IMR-90 (cell line): ENCODE measurements at regions of chr2 and their contacts with region 1.

Region 1: DNA sequence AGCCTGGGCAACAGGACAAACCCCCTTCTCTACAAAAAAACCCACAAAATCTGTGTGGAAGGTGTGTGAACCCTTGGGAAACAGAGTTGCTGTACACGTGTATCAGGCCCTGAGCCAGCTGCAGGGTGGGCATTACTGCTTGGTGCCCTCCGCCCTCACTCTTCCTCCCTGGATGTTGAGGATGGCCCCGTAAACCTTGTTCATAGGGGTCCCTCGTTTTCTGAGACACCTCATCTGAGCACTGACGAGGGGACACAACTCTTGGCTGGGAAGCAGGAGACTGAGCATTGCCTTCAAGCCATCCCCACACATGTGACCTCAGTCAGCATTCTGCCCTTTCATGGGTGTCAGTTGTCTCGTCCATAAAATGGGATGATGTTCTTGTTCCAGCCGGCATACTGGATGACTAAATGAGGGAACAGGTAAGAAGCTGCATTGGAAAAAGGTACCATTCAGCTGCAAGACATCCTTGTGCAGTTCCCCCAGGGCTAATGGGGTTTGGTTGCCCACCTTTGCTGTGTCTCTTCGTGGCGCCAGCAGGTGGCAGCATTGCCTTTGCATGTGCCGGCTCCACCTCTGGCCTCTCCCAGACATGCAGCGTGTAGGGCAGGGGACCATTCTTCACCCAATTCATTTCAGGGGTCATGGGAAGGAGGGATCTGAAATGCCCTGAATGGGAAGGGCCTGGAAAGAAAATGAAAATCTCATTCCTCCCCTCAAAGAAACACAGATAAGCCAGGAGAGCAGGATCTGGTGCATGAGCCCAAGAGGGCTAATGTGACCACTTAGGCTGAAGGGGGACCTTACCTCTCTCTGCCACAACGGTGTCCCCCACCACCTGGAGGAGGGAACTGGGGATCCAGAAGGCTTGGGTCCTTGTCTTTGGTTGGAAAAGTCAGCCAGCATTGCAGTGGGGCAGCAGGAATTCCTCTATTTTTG is 36.4 kb upstream of the HAAO start:
- DNase-seq: peak; percentile 63
- ATAC-seq: peak; percentile 85
- H3K4me3 ChIP-seq: no peak overlapping the region
- H3K27ac ChIP-seq: no peak overlapping the region
- H3K4me1 ChIP-seq: peaks cover 2% of the 10 kb centered on the region; the same call in 1 of the 2 replicates
- H3K27me3 ChIP-seq: no peaks in the 10 kb centered on the region
- CTCF ChIP-seq: peak; percentile 84
- POLR2A ChIP-seq: no peak
- RAD21 ChIP-seq: peak; percentile 88

Region 2: DNA sequence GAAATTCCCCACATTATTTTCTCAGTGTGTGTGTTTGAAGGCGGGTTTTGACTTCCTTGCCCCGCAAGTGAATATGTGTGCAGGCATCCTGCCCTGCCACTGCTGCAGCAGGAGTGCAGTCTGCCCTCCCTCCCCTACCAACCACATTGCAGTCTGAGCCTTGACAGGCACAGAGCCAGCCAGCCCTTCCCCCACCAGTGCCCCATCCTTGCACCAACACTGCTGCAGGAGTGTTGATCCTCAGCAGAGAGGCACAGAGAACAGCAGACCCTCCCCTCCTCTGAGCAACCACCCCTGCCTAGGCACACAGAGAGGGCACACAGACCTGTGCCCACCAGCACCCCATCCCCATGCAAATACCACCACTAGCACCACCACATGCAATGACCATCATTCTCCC is 1463.9 kb before region 1 on chr2:
- CTCF ChIA-PET with region 1: no interaction called
- POLR2A ChIA-PET with region 1: no interaction called
- dilution Hi-C with region 1: no loop called
- in situ Hi-C with region 1: no loop called
- intact Hi-C with region 1: no loop called
- DNase-seq: no peak
- ATAC-seq: no peak
- H3K4me3 ChIP-seq: no peak overlapping the region
- H3K27ac ChIP-seq: no peak overlapping the region
- H3K4me1 ChIP-seq: no peaks in the 10 kb centered on the region
- H3K27me3 ChIP-seq: no peaks in the 10 kb centered on the region
- CTCF ChIP-seq: no peak
- POLR2A ChIP-seq: no peak
- RAD21 ChIP-seq: no peak

Region 3: DNA sequence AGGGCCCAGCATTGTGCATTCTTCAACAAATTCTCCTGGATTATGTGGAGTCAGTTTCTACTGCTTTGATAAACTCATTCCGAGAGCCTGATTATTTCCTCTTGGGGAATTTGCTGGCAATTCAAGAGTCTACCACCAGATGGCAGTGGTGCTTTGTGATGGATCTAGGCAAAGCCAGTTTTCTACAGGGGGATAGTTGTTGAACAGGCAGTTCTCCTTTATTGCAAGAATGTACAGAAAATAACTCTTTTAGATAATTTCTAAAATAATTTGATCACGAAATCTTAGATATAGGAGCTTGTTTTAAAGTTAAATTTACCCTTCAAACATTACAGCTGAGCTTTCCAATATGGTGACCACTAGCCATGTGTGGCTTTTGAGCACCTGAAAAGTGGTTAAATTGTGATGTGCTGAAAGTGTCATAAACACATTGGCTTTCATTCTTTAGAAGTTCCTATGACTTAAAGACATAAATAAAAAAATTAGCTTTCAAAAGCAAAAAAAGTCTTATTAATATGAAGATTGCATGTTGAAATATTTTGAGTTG is 30.3 kb after region 1 on chr2:
- CTCF ChIA-PET with region 1: interaction called, 4 read pairs
- POLR2A ChIA-PET with region 1: no interaction called
- dilution Hi-C with region 1: no loop called
- in situ Hi-C with region 1: no loop called
- intact Hi-C with region 1: loop called (anchors 1 kb)
- DNase-seq: peak; percentile 81
- ATAC-seq: peak; percentile 81
- H3K4me3 ChIP-seq: no peak overlapping the region
- H3K27ac ChIP-seq: no peak overlapping the region
- H3K4me1 ChIP-seq: peaks cover 5% of the 10 kb centered on the region
- H3K27me3 ChIP-seq: no peaks in the 10 kb centered on the region
- CTCF ChIP-seq: peak; percentile 93
- POLR2A ChIP-seq: no peak
- RAD21 ChIP-seq: peak; percentile 95

Region 4: DNA sequence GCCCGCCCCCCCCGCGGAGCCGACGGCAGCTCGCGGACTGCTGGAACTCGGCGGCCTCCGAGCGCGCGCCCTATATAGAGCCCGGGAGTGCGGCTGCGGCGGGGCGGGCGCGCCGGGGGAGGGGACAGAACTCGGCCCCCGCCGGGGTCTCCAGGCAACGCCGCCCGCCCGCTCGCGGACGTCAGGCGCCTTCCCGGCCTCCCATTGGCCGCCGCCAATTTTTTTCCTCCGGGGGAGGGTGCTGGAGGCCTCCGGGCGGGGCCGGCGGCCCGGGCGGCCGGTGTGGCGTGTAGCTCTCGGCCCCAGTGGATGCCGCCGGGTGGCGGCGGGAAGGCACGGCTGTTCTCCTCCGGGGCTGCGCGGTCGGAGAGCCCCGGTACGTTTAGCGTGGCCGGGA is 397.8 kb after region 1 on chr2 and contains the start of gene ZFP36L2:
- CTCF ChIA-PET with region 1: interaction called, 4 read pairs
- POLR2A ChIA-PET with region 1: no interaction called
- dilution Hi-C with region 1: no loop called
- in situ Hi-C with region 1: no loop called
- intact Hi-C with region 1: loop called (anchors 1 kb)
- DNase-seq: peak; percentile 93
- ATAC-seq: peak; percentile 73
- H3K4me3 ChIP-seq: peak within 1 kb of the TSS; percentile 87
- H3K27ac ChIP-seq: peak within 1 kb of the TSS; percentile 96
- H3K4me1 ChIP-seq: peaks cover 8% of the 10 kb centered on the region
- H3K27me3 ChIP-seq: no peaks in the 10 kb centered on the region
- CTCF ChIP-seq: peak; percentile 19; the same call in 1 of the 2 replicates
- POLR2A ChIP-seq: peak; percentile 97
- RAD21 ChIP-seq: peak; percentile 14; the same call in 1 of the 2 replicates
- total RNA-seq, gene ZFP36L2: 1.8 and 2.2 TPM in 2 replicates

Region 5: DNA sequence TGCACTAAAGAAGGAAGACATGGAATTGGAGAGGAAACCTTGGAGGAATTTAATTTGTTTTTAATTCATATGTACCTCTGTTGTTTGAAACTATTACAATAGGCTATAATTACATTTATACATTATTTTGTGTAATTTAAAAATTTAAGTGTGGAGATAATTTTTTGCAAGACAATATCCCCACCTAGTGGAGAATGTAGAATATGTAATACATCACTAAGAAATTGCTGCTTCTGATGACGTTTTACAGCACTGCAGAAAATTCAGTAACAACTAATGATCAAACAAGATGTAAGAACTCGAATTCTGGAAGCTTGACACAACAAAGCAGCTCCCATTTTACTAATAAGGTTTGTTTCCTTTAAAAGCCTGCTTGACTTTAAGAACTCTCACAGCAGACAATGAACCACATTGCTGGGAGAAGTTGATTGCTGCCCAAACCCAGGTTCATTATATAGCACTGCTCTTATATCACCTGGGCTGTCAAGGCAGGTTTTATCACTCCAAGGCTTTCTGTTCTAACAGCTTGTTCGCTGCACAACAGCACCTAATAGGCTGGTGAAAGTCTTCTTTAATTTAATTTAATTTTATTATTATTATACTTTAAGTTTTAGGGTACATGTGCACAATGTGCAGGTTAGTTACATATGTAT is 713.7 kb after region 1 on chr2:
- CTCF ChIA-PET with region 1: no interaction called
- POLR2A ChIA-PET with region 1: no interaction called
- dilution Hi-C with region 1: no loop called
- in situ Hi-C with region 1: no loop called
- intact Hi-C with region 1: loop called (anchors 2 kb)
- DNase-seq: peak; percentile 68
- ATAC-seq: peak; percentile 77
- H3K4me3 ChIP-seq: no peak overlapping the region
- H3K27ac ChIP-seq: no peak overlapping the region
- H3K4me1 ChIP-seq: peaks cover 7% of the 10 kb centered on the region
- H3K27me3 ChIP-seq: no peaks in the 10 kb centered on the region
- CTCF ChIP-seq: peak; percentile 58
- POLR2A ChIP-seq: no peak
- RAD21 ChIP-seq: peak; percentile 72

Region 6: DNA sequence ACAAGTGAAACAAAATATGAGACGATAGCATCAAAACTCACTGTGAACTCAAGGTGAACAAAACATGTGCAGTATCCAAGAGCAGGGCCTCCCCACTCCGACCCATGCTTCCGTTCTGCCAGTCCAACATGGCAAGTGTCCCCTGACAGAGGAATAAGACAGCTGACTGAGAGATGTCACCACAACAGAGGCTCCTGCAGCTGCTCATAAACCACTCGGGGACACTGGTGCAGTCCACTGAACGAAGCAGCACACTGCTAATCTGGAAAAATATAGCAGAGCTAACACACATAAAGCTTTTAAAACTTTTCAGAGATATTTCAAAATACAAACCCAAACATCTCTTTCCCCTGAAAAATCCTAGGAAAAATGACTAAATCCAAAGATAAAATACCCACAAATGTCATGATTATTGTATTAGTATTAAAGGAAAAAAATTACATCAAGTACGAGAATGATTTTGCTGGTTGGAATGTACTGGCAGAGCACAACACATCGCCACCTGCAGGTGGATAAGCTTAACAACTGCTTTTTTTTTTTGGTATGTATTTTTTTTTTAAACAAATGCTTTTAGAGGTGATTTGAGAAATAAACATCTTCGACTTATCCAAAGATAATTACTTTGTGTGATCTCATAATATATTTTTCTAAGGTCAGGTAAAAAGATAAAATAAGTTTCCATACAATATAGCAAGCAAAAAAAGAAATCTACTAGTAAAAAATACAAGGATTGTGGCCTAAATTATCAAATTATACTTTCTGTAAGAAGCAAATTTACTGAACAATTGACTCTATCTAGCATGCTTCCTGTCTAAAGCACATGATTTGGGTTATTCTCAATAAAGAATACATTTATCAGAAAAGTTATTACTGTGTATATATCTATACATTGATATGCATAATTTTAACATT is 748.5 kb after region 1 on chr2:
- CTCF ChIA-PET with region 1: interaction called, 4 read pairs
- POLR2A ChIA-PET with region 1: no interaction called
- dilution Hi-C with region 1: no loop called
- in situ Hi-C with region 1: loop called (anchors 25 kb)
- intact Hi-C with region 1: loop called (anchors 1 kb)
- DNase-seq: peak; percentile 84
- ATAC-seq: peak; percentile 77
- H3K4me3 ChIP-seq: no peak overlapping the region
- H3K27ac ChIP-seq: no peak overlapping the region
- H3K4me1 ChIP-seq: peaks cover 2% of the 10 kb centered on the region; the same call in 1 of the 2 replicates
- H3K27me3 ChIP-seq: no peaks in the 10 kb centered on the region
- CTCF ChIP-seq: peak; percentile 82
- POLR2A ChIP-seq: no peak
- RAD21 ChIP-seq: peak; percentile 26; the same call in 1 of the 2 replicates